MCF 10A (cell line): ENCODE measurements at regions of chr4 and their contacts with region 1.

Region 1: DNA sequence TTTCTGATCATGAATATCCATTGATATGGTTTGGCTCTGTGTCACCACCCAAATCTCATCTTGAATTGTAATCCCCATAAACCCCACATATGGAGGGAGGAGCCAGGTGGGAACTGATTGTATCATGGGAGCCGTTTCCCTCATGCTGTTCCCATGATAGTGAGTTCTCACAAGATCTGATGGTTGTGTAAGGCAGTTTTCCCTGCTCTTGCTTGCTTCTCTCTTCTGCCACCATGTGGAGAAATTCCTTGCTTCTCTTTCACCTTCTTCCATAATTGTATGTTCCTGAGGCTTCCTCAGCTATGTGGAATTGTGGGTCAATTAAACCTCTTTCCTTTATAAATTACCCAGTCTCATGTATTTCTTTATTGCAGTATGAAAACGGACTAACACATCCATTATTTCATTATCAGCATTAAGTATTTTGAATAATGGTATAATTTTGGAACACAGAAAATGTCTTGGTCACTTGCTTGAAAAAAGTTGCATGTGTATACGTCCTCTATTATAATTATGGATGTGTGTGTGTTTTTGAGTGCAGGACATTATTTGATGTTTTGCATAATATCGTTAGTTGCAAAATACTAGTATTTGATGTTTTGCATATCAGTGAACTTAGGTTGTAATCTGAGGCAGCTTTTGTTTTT is 334.6 kb downstream of the PCDH10 start:
- DNase-seq: peak; percentile 61
- H3K4me3 Mint-ChIP-seq: no peak overlapping the region
- H3K27ac Mint-ChIP-seq: peak overlapping the region; percentile 22
- H3K4me1 Mint-ChIP-seq: no peaks in the 10 kb centered on the region
- H3K27me3 Mint-ChIP-seq: no peaks in the 10 kb centered on the region
- CTCF ChIP-seq: peak; percentile 43

Region 2: DNA sequence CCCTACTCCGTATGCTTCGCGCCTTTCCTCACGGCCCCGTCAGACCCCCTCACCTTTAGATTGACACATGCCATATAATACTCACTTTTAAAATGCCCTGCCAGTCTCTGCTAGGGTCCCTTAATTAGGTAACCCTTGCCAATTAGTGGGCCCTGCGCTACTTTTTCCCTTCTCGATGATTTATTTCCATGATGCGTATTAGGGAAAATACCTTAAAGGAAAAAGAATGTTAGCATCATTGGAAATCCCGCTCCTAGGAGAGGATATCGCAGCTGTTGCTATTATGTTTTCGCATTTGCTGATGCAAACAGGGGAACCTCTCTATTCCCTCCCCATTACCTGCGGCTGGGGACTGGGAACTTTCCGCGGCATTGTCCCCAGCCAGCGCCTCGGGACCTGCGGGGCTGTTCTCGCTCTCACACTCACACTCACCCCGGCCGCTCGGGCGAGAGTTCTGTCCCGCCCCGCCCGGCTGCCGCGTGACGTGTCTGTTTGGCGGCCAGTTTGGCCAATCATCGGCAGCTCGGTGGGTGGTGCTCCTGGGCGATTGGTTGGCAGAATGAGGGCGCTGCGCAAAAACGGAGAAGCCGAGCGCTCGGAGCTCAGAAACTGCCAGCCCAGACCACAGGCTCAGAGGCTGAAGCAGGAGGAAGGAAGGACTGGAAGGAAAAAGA is 334.9 kb before region 1 on chr4 and contains the start of gene PCDH10:
- CTCF ChIA-PET with region 1: interaction called, 26 read pairs
- POLR2A ChIA-PET with region 1: no interaction called
- intact Hi-C with region 1: loop called (anchors 2 kb)
- DNase-seq: no peak
- H3K4me3 Mint-ChIP-seq: no peak within 1 kb of the TSS
- H3K27ac Mint-ChIP-seq: no peak within 1 kb of the TSS
- H3K4me1 Mint-ChIP-seq: peaks cover 10% of the 10 kb centered on the region
- H3K27me3 Mint-ChIP-seq: peaks cover 45% of the 10 kb centered on the region
- CTCF ChIP-seq: no peak
- total RNA-seq, gene PCDH10: not detected in 2 replicates

Region 3: DNA sequence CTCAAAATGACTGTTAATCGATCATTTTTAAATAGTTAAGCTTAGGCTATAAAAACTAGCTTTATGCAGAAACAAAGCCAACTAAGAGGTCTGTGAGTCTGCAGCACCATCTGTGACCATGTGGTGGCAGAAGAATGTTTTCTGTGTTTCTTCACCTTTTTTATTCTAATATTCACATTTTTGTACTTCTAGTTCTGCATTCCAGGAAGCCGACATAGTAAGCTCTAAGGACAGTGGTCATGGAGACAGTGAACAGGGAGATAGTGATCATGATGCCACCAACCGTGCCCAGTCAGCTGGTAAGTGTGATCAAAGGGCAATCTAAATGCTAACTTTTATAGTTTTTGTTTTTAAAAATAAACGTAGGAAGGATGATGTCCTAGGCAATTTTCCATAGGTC is 329.0 kb before region 1 on chr4:
- CTCF ChIA-PET with region 1: interaction called, 26 read pairs
- POLR2A ChIA-PET with region 1: no interaction called
- intact Hi-C with region 1: loop called (anchors 2 kb)
- DNase-seq: peak; percentile 31
- H3K4me3 Mint-ChIP-seq: no peak overlapping the region
- H3K27ac Mint-ChIP-seq: no peak overlapping the region
- H3K4me1 Mint-ChIP-seq: peaks cover 5% of the 10 kb centered on the region
- H3K27me3 Mint-ChIP-seq: peaks cover 23% of the 10 kb centered on the region
- CTCF ChIP-seq: peak; percentile 51

Region 4: GRCh38 chr4:133287396-133287795 is 196.3 kb before region 1 on chr4:
- CTCF ChIA-PET with region 1: no interaction called
- POLR2A ChIA-PET with region 1: no interaction called
- intact Hi-C with region 1: no loop called
- DNase-seq: no peak
- H3K4me3 Mint-ChIP-seq: no peak overlapping the region
- H3K27ac Mint-ChIP-seq: no peak overlapping the region
- H3K4me1 Mint-ChIP-seq: no peaks in the 10 kb centered on the region
- H3K27me3 Mint-ChIP-seq: no peaks in the 10 kb centered on the region
- CTCF ChIP-seq: no peak

Region 5: DNA sequence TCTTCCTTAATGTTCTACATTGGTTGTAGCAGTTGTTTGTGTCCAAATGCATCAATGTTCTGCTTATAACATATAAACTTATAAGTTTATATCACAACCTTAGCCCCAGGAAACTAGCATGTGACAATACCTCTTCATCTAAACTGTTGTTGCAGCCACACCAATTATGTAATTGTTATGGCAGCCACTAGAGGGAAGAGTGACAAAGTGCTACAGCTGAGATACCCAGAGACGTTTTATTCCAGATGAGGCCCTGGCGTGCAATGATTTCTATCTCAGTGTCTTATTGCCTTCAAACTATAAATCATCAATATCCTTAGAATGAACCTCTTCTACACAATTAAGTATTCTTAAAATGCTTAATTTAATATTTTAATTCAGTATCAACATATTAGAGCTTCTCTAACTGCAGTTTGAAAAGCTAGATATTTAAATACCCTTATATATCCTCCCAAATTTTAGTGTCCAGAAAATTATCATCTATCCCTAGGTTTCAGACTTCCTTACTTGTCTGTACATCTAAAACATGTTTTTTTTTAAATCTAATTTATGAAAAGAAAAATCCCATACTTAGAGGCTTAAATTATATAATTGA is 163.1 kb before region 1 on chr4:
- CTCF ChIA-PET with region 1: interaction called, 16 read pairs
- POLR2A ChIA-PET with region 1: no interaction called
- intact Hi-C with region 1: loop called (anchors 5 kb)
- DNase-seq: peak; percentile 51
- H3K4me3 Mint-ChIP-seq: no peak overlapping the region
- H3K27ac Mint-ChIP-seq: no peak overlapping the region
- H3K4me1 Mint-ChIP-seq: peaks cover 5% of the 10 kb centered on the region
- H3K27me3 Mint-ChIP-seq: peaks cover 38% of the 10 kb centered on the region
- CTCF ChIP-seq: peak; percentile 47